Activated CD4-positive, alpha-beta memory T cell treated with anti-CD3 and anti-CD28 coated beads, Interleukin-2, amount 10 ng/mL, durations not matched to agents 7 days and 5 days (primary cell): ENCODE measurements at regions of chr1 and their contacts with region 1.

Region 1: DNA sequence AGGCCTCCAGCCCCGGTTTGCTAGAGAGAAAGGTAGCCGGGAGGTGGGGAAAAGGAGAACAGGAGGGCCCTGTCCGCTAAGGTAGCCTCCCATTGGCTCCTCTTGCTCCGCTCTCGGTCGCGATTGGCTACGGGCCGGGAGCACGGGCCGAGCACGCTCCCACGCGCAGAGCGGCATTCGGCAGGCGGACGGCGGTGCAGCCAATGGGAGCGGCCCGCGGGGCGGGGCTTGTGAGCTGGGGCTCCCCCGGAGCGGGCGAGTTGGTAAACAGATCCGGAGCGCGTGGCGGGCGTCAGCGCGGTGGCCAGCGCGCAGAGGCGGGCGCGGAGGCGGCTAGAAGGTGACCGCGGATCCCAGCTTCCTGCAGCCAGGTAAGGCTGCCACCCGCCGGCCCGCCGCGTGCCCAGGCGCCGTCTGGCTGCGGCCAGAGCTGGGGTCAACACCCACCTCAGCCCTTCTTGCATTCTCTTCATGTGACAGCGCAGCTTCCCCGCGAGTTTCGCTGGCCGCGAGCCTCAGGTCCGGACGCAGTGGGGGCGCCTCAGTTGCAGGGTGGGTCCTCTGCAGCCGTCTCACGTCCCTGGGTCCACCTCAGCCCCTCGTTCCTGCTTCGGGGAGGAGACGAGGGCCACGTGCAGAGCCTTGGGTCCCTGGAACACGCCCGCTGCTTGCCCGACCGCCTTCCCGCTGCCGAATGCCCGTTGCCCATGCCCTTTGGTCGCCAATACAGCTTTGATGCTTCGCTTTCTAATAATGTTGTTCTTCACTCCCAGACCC is at the start of gene COQ8A:
- DNase-seq: peak; percentile 99
- H3K4me3 Mint-ChIP-seq: peak within 1 kb of the TSS; percentile 76
- H3K27ac Mint-ChIP-seq: peak within 1 kb of the TSS; percentile 96
- H3K4me1 Mint-ChIP-seq: peaks cover 33% of the 10 kb centered on the region
- H3K27me3 Mint-ChIP-seq: peaks cover 3% of the 10 kb centered on the region
- total RNA-seq, gene COQ8A: 18.1 to 18.5 TPM

Region 2: DNA sequence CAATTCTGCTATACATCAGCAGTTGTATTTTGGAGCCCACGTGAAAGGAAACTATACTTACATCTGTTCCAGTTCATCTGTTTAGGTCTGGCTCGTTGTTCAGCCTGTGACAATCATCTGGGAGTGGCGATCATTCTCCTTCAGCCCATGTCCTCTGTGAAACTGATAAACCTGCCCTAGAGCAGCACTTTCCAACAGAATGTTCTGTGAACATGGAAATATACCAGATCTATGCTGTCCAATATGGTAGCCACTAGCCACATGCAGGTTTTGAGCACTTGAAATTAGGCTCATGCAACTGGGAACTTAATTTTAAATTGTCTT is 24.6 kb before region 1 on chr1:
- CTCF ChIA-PET with region 1: interaction called, 3 read pairs
- POLR2A ChIA-PET with region 1: interaction called, 14 read pairs
- DNase-seq: no peak
- H3K4me3 Mint-ChIP-seq: no peak overlapping the region
- H3K27ac Mint-ChIP-seq: no peak overlapping the region
- H3K4me1 Mint-ChIP-seq: peaks cover 19% of the 10 kb centered on the region
- H3K27me3 Mint-ChIP-seq: no peaks in the 10 kb centered on the region

Region 3: DNA sequence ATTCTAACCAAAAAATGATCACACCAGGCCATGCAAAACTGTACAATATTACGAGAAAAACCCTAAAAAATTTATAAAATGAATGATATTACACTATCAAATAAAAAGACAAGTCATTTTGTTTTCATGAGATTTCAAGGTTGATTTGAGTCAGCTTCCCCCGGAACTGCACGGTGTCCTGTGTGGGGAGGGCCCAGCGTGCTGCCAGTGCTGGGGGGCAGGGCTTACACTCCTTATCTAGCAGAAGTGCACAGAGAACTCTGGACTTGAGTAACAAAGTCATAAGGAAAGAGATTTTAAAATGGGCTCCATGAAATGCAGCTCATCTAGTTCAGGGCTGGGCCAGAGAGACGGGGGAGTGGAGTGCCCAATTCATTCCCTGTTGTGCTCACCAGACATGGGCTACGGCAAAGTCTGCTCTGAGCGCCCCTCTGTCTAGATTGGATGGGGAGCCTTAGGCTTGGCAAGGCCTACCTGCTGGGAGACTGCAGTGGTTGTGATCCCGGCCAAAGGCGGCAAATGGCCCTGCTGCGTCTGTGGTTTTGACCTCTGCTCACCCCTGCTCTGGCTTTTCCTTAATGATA is 50.0 kb after region 1 on chr1:
- CTCF ChIA-PET with region 1: interaction called, 5 read pairs
- POLR2A ChIA-PET with region 1: interaction called, 11 read pairs
- DNase-seq: peak; percentile 80
- H3K4me3 Mint-ChIP-seq: no peak overlapping the region
- H3K27ac Mint-ChIP-seq: peak overlapping the region; percentile 50
- H3K4me1 Mint-ChIP-seq: peaks cover 25% of the 10 kb centered on the region
- H3K27me3 Mint-ChIP-seq: no peaks in the 10 kb centered on the region